ENCODE measurements at regions of chr13 and their contacts with region 1.

Region 1: GRCh38 chr13:36431654-36432511 is at the start of gene CCNA1:
- DNase-seq: peak; percentile 30
- ATAC-seq: peak; percentile 62
- H3K4me3 Mint-ChIP-seq: peak within 1 kb of the TSS; percentile 72
- H3K27ac Mint-ChIP-seq: no peak within 1 kb of the TSS
- H3K4me1 Mint-ChIP-seq: peaks cover 19% of the 10 kb centered on the region
- H3K27me3 Mint-ChIP-seq: peaks cover 39% of the 10 kb centered on the region
- CTCF ChIP-seq: no peak
- total RNA-seq, gene CCNA1: 0.20 and 0.32 TPM in 2 replicates

Region 2: GRCh38 chr13:36599711-36600110 is 167.8 kb after region 1 on chr13:
- CTCF ChIA-PET with region 1: no interaction called
- POLR2A ChIA-PET with region 1: no interaction called
- intact Hi-C with region 1: no loop called
- DNase-seq: no peak
- ATAC-seq: no peak
- H3K4me3 Mint-ChIP-seq: no peak overlapping the region
- H3K27ac Mint-ChIP-seq: no peak overlapping the region
- H3K4me1 Mint-ChIP-seq: no peaks in the 10 kb centered on the region
- H3K27me3 Mint-ChIP-seq: no peaks in the 10 kb centered on the region
- CTCF ChIP-seq: no peak

Region 3: GRCh38 chr13:36919833-36920615 is 488.1 kb after region 1 on chr13 and contains the start of gene SMAD9:
- CTCF ChIA-PET with region 1: no interaction called
- POLR2A ChIA-PET with region 1: no interaction called
- intact Hi-C with region 1: loop called (anchors 5 kb)
- DNase-seq: no peak
- ATAC-seq: peak; percentile 31
- H3K4me3 Mint-ChIP-seq: peak within 1 kb of the TSS; percentile 74
- H3K27ac Mint-ChIP-seq: no peak within 1 kb of the TSS
- H3K4me1 Mint-ChIP-seq: peaks cover 12% of the 10 kb centered on the region
- H3K27me3 Mint-ChIP-seq: peaks cover 55% of the 10 kb centered on the region
- CTCF ChIP-seq: no peak
- total RNA-seq, gene SMAD9: not detected in 2 replicates